Astrocyte of the cerebellum (primary cell): ENCODE measurements at regions of chr5 and their contacts with region 1.

Region 1: GRCh38 chr5:73448463-73449136 is at the start of gene FOXD1:
- DNase-seq: peak; percentile 89
- H3K4me3 ChIP-seq: peak within 1 kb of the TSS; percentile 70
- CTCF ChIP-seq: peak; percentile 3

Region 2: GRCh38 chr5:72920690-72921502 is 527.7 kb before region 1 on chr5:
- in situ Hi-C with region 1: loop called (anchors 25 kb)
- DNase-seq: peak; percentile 29
- H3K4me3 ChIP-seq: no peak overlapping the region
- CTCF ChIP-seq: no peak

Region 3: DNA sequence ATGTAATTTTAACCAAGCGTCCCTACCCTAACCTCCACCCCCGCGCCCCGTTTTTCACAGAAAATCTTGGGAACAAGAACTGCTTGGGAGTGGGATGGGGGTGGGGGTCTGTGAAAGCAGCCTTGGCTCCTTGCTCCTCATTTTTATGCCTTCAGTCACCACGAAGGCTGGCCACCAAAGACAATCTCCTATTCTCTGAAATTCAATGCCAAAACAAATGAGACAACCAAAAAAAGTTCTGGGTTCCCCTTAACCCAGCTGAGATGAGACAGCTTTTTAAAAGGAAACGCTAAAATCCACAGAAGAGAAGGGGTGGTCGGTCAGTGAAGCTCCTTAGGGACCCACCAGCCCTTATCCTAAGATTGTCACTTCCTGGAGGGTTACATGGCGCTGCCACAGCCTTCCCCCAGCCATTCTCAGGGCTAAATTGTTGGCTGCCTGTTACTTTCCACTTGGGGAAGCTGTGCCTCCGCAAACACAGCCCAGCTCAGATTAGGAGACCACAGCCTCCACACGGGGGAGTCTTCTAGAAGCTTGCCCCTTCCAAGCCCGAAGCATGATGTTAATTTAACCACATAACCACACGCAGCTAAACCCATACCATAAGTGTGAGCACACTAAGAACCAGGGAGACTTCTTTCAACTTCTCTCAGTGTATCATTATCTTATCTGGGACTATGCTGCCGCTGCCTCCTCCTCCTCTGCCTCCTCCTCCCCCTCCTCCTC is 136.3 kb before region 1 on chr5:
- in situ Hi-C with region 1: loop called (anchors 25 kb)
- DNase-seq: peak; percentile 97
- H3K4me3 ChIP-seq: no peak overlapping the region
- CTCF ChIP-seq: peak; percentile 73

Region 4: DNA sequence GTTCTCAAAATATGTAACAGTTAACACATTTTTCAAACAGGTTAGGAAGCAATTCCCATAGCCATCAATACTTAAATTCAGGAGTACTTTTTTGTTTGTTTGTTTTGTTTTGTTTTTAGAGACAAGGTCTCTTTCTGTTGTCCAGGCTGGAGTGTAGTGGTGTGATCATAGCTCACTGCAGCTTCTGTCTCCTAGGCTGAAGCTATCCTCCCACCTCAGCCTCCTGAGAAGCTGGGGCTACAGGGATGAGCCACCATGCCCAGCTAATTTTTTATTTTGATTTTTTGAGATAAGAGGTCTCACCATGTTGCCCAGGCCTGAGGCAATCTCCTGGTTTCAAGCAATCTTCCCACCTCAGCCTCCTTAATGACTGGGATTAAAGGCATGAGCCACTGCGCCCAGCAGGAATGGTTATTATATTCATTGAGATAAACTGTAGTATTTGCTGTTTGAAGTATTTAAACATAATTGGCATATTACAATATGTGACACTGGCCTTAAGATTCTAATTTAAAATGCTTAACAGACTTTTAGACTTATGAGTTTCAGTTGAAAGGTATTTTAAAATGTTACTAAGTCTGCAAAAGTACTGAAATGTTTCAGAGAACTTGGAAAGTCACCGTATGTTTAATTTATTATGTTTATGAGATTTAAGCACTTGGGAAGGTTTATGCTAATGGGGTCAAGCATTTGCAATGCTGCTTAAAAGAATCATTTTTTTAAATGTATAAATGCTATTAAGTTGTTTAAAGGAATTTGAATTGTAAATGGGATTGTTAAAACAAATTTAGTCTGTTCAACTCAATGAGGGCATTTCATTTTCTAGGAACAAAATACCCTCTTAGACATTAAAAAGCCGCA is 133.9 kb after region 1 on chr5:
- in situ Hi-C with region 1: no loop called
- DNase-seq: no peak
- H3K4me3 ChIP-seq: no peak overlapping the region
- CTCF ChIP-seq: no peak